GM12878 (cell line): ENCODE measurements at regions of chr7 and their contacts with region 1.

Region 1: GRCh38 chr7:116588641-116589594 is 64.1 kb downstream of the CAV1 start:
- DNase-seq: no peak
- ATAC-seq: peak; percentile 80
- H3K4me3 ChIP-seq: no peak overlapping the region
- H3K27ac ChIP-seq: no peak overlapping the region
- H3K4me1 ChIP-seq: peaks cover 29% of the 10 kb centered on the region
- H3K27me3 ChIP-seq: peaks cover 0 to 2% of the 10 kb centered on the region in 2 experiments; a peak in 2 of 4 replicates
- CTCF ChIP-seq: peak; percentile 40 to 70 (median 51); a peak in 5 of 6 replicates
- EP300 ChIP-seq: no peak
- POLR2A ChIP-seq: no peak
- RAD21 ChIP-seq: peak; percentile 88

Region 2: DNA sequence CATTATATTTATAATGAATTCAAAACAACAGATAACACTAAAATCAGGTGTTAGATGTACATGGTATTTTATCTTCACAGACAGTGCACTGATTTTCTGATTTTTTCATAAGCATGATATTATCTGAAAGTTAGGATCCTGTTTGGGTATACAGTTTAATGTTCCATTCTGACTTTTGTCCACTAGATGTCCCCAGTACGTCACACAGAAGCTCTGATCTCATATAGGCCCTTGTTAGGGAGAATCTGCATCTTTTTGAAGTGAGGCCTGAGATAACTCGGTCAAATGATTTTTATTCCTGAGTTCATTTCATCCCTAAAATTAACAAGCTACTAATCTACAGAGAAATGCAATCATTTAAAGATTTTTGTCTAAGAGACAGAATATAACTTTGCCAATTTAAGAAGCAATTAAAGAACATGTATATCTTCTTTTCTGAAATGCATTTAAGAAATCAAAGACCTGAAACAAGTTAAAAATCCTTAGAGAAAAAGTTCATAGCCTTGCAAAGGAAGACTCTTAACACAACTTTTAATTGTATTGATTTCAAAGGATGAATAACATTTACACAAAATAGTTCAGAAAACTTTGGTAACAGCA is 450.6 kb before region 1 on chr7:
- CTCF ChIA-PET with region 1: interaction called, 10 read pairs
- POLR2A ChIA-PET with region 1: no interaction called
- RAD21 ChIA-PET with region 1: interaction called, 9 read pairs
- SMC1A ChIA-PET with region 1: interaction called, 5 read pairs
- in situ Hi-C with region 1: no loop called
- intact Hi-C with region 1: loop called (anchors 10 kb)
- DNase-seq: no peak
- ATAC-seq: peak; percentile 99
- H3K4me3 ChIP-seq: no peak overlapping the region
- H3K27ac ChIP-seq: no peak overlapping the region
- H3K4me1 ChIP-seq: no peaks in the 10 kb centered on the region
- H3K27me3 ChIP-seq: no peaks in the 10 kb centered on the region
- CTCF ChIP-seq: peak; percentile 65 to 83 (median 71)
- EP300 ChIP-seq: no peak
- POLR2A ChIP-seq: no peak
- RAD21 ChIP-seq: peak; percentile 99

Region 3: DNA sequence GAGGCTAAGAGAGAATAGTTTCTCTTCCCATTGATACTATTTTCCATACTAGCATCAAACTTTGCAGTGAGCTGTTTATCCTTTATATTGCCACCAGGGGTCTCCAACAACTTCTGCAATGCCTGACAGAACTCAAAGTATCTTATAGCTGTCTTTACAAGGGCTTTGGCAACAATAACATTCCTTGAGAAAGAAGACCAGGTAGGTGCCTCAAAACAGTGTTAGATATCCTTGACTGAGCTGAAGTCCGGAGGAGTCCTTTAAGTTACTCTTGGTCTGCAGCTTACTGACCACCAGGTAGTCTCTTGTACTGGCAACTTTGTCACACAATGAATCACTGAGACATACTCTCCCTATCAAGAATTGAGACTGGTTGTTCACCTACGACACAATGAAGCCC is 408.6 kb before region 1 on chr7:
- CTCF ChIA-PET with region 1: interaction called, 26 read pairs
- POLR2A ChIA-PET with region 1: no interaction called
- RAD21 ChIA-PET with region 1: interaction called, 16 read pairs
- SMC1A ChIA-PET with region 1: interaction called, 16 read pairs
- in situ Hi-C with region 1: loop called (anchors 10 kb)
- intact Hi-C with region 1: no loop called
- DNase-seq: no peak
- ATAC-seq: peak; percentile 88
- H3K4me3 ChIP-seq: no peak overlapping the region
- H3K27ac ChIP-seq: no peak overlapping the region
- H3K4me1 ChIP-seq: no peaks in the 10 kb centered on the region
- H3K27me3 ChIP-seq: no peaks in the 10 kb centered on the region
- CTCF ChIP-seq: peak; percentile 62 to 79 (median 70)
- EP300 ChIP-seq: no peak
- POLR2A ChIP-seq: no peak
- RAD21 ChIP-seq: peak; percentile 85

Region 4: DNA sequence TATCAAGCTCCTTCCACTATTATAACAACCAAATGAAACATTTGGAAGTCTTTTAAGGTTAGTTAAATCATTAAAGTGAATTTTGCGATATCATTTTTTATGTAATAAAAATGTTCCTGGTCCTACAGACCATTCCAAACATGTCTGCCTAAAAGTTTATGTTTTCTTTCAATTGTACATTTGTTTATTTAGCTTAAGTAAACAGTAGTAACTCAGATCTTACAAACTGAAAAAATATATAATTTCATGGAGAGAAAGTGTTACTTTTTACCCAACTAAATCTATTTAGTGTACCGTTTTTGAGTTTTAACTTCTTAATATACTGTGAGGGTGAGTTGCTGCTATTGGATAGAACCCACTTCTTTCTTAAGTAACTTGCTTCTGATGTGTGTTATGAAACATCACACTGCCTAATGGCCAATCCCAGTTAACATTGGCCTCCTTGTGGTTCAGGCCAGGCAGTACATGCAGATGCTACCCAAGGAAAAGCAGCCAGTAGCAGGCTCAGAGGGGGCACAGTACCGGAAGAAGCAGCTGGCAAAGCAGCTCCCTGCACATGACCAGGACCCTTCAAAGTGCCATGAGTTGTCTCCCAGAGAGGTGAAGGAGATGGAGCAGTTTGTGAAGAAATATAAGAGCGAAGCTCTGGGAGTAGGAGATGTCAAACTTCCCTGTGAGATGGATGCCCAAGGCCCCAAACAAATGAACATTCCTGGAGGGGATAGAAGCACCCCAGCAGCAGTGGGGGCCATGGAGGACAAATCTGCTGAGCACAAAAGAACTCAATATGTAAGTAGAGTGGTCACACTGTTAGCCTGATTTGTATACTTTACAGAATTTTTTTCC is 339.0 kb before region 1 on chr7:
- CTCF ChIA-PET with region 1: interaction called, 169 read pairs
- POLR2A ChIA-PET with region 1: no interaction called
- RAD21 ChIA-PET with region 1: interaction called, 50 read pairs
- SMC1A ChIA-PET with region 1: interaction called, 156 read pairs
- in situ Hi-C with region 1: no loop called
- intact Hi-C with region 1: no loop called
- DNase-seq: no peak
- ATAC-seq: peak; percentile 79
- H3K4me3 ChIP-seq: no peak overlapping the region
- H3K27ac ChIP-seq: no peak overlapping the region
- H3K4me1 ChIP-seq: no peaks in the 10 kb centered on the region
- H3K27me3 ChIP-seq: no peaks in the 10 kb centered on the region
- CTCF ChIP-seq: peak; percentile 18 to 45 (median 38)
- EP300 ChIP-seq: no peak
- POLR2A ChIP-seq: no peak
- RAD21 ChIP-seq: peak; percentile 35

Region 5: GRCh38 chr7:116576350-116577319 is 12.3 kb before region 1 on chr7:
- CTCF ChIA-PET with region 1: interaction called, 35 read pairs
- POLR2A ChIA-PET with region 1: no interaction called
- RAD21 ChIA-PET with region 1: interaction called, 7 read pairs
- SMC1A ChIA-PET with region 1: interaction called, 13 read pairs
- in situ Hi-C with region 1: no loop called
- intact Hi-C with region 1: no loop called
- DNase-seq: no peak
- ATAC-seq: peak; percentile 65
- H3K4me3 ChIP-seq: no peak overlapping the region
- H3K27ac ChIP-seq: no peak overlapping the region
- H3K4me1 ChIP-seq: peaks cover 25% of the 10 kb centered on the region
- H3K27me3 ChIP-seq: no peaks in the 10 kb centered on the region
- CTCF ChIP-seq: no peak
- EP300 ChIP-seq: no peak
- POLR2A ChIP-seq: no peak
- RAD21 ChIP-seq: no peak

Region 6: DNA sequence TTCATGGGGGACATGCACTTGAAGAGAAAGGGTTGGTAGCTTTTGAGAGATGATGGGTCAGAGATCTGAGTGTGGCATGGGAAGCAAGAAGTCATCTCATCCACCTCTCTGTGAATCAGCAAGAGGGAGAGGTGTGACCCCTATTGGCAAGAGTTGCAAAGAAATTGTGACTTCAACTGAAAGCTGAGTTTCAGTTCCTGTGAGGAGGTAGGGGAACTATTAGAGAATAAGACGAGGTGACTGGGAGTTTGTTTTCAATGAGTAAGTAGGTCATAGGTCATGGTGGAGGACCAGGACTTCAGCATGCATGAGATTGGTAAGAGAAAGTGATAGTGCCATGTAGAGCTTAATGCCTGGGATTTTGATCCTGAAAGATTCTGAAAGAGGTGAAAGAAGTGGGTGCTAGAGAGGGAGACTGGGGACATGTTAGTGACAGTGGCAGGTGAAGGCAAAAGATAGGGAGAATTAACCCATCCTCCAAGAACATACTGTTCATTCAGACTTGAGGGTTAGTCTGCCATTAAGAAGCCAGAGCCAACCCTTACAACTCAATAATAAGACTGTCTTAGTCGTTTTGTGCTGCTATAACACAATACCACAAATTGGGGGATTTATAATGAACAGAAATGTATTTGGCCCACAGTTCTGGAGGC is 198.0 kb after region 1 on chr7:
- CTCF ChIA-PET with region 1: interaction called, 106 read pairs
- POLR2A ChIA-PET with region 1: no interaction called
- RAD21 ChIA-PET with region 1: interaction called, 28 read pairs
- SMC1A ChIA-PET with region 1: interaction called, 26 read pairs
- in situ Hi-C with region 1: no loop called
- intact Hi-C with region 1: loop called (anchors 2 kb)
- DNase-seq: peak; percentile 58
- ATAC-seq: peak; percentile 99
- H3K4me3 ChIP-seq: no peak overlapping the region
- H3K27ac ChIP-seq: no peak overlapping the region
- H3K4me1 ChIP-seq: peaks cover 6% of the 10 kb centered on the region; the same call in 1 of the 2 replicates
- H3K27me3 ChIP-seq: no peaks in the 10 kb centered on the region; a peak in 1 of 4 replicates
- CTCF ChIP-seq: peak; percentile 65 to 78 (median 72)
- EP300 ChIP-seq: no peak
- POLR2A ChIP-seq: no peak
- RAD21 ChIP-seq: peak; percentile 80